Tibial artery (tissue), 4 donors: ENCODE measurements at regions of chr14 and their contacts with region 1.

Region 1: GRCh38 chr14:68621400-68622365 is 171.2 kb downstream of the ZFP36L1 start:
- DNase-seq: peak in 1 of 2 donors; percentile 52
- H3K4me3 ChIP-seq: no peak overlapping the region
- H3K27ac ChIP-seq: peak overlapping the region; percentile 44 to 64
- H3K4me1 ChIP-seq: peaks cover 0 to 36% (median 21%) of the 10 kb centered on the region in 4 donors
- H3K27me3 ChIP-seq: no peaks in the 10 kb centered on the region
- CTCF ChIP-seq: no peak

Region 2: GRCh38 chr14:68557648-68558047 is 64.0 kb before region 1 on chr14:
- intact Hi-C with region 1: loop called (anchors 5 kb)
- DNase-seq: no peak
- H3K4me3 ChIP-seq: no peak overlapping the region
- H3K27ac ChIP-seq: no peak overlapping the region
- H3K4me1 ChIP-seq: peaks cover 0 to 44% (median 30%) of the 10 kb centered on the region in 4 donors
- H3K27me3 ChIP-seq: no peaks in the 10 kb centered on the region
- CTCF ChIP-seq: no peak

Region 3: DNA sequence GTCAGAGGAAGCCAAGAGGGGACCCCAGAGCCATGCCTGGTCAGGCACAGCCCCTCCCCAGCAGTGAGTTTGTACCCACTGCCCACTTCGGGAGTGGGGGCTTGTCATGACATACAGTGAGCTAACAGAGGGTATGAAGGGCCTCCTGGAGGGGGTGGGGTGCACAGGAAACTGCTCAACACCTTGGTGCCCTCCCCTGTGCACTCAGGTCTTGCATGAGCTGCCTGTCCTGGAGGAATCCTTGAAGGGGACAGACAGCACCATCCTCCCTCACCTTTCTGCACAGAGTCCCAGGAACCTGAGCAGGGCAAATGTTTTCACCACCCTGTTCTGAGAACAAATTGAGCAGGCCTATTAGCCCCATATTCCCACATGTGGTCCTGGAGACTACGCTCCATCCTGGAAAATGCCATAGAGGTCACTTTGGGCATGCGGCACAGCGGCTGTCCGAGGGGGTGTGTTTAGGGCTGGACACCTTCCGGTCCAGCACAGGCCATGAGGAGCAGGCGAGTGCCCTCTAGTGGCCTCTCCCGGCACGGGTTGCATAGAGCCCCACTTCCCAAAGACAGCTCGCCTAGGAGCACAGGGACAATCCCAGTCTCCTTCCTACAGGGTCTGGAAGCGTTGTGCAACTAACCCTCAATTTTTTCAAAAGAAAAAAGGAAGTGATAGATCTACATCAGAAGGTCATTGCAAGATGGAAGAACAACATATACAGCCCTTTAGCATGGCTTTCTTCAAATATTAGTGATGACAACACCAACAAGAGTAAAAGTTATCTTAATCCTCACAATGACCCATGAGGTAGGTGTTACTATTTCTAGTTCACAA is 203.0 kb after region 1 on chr14:
- intact Hi-C with region 1: no loop called
- DNase-seq: peak; percentile 86 to 90
- H3K4me3 ChIP-seq: no peak overlapping the region
- H3K27ac ChIP-seq: no peak overlapping the region
- H3K4me1 ChIP-seq: peaks cover 0 to 8% (median 3%) of the 10 kb centered on the region in 4 donors
- H3K27me3 ChIP-seq: no peaks in the 10 kb centered on the region
- CTCF ChIP-seq: peak; percentile 82 to 96